ENCODE measurements at regions of chr1 and their contacts with region 1.

Region 1: GRCh38 chr1:46247436-46248121 is at the start of gene RAD54L:
- DNase-seq: peak; percentile 98
- ATAC-seq: peak; percentile 97
- total RNA-seq, gene RAD54L: 0.73 TPM

Region 2: DNA sequence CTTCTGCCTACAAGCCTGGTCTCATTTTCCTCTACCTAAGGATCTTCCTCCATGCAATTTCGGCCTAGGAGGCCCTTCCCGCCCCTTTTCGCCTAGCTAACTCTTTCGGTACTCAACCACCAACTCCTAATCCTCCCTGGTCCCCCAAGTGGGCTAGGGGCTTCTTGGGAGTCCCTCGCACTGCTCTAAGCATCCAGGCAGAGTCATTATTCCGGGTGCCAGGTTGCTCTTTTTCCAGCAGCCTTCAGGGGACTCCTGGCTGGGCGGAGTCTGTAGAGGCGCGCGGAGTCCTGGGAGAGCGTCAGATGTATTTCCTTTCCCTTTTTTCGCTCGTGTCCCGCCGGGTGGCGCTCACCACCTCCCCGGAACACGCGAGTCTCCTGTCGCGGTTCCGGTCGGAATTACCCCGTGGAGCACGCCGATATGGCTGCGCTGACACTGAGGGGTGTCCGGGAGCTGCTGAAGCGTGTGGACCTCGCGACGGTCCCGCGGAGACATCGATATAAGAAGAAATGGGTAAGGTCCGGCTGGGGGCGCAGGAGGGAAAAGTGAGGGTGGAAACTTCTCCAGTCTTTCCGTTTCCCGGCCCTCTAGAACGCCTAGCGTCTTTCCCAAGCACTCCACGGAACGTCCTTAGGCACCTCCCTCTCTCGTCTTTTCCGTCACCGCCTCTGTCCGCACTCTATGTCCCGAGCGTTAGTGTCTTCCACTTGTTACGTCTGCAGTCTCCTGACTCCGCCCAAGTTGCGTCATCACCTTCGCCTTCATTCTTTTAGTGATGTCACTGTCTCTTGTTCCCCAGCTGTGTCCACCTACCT is 93.0 kb after region 1 on chr1 and contains the start of gene NSUN4:
- intact Hi-C with region 1: loop called (anchors 5 kb)
- DNase-seq: peak; percentile 96
- ATAC-seq: peak; percentile 98
- total RNA-seq, gene NSUN4: 14.0 TPM

Region 3: GRCh38 chr1:46675549-46676314 is 428.2 kb after region 1 on chr1:
- intact Hi-C with region 1: no loop called
- DNase-seq: no peak
- ATAC-seq: no peak